CD4-positive, alpha-beta memory T cell (primary cell): ENCODE measurements at regions of chr5 and their contacts with region 1.

Region 1: GRCh38 chr5:175729829-175730277 is 72.0 kb downstream of the HRH2 start:
- DNase-seq: peak; percentile 82 to 89 (median 87)
- H3K4me3 ChIP-seq: no peak overlapping the region
- H3K4me3 Mint-ChIP-seq: peak overlapping the region in 1 of 8 donors; percentile 54
- H3K27ac ChIP-seq: no peak overlapping the region
- H3K27ac Mint-ChIP-seq: peak overlapping the region in 3 of 7 donors; percentile 14 to 46 (median 44)
- H3K4me1 ChIP-seq: peaks cover 5% of the 10 kb centered on the region
- H3K4me1 Mint-ChIP-seq: peaks cover 4 to 7% (median 7%) of the 10 kb centered on the region in 4 donors
- H3K27me3 ChIP-seq: peaks cover 4% of the 10 kb centered on the region
- H3K27me3 Mint-ChIP-seq: peaks cover 14 to 18% of the 10 kb centered on the region in 2 donors

Region 2: DNA sequence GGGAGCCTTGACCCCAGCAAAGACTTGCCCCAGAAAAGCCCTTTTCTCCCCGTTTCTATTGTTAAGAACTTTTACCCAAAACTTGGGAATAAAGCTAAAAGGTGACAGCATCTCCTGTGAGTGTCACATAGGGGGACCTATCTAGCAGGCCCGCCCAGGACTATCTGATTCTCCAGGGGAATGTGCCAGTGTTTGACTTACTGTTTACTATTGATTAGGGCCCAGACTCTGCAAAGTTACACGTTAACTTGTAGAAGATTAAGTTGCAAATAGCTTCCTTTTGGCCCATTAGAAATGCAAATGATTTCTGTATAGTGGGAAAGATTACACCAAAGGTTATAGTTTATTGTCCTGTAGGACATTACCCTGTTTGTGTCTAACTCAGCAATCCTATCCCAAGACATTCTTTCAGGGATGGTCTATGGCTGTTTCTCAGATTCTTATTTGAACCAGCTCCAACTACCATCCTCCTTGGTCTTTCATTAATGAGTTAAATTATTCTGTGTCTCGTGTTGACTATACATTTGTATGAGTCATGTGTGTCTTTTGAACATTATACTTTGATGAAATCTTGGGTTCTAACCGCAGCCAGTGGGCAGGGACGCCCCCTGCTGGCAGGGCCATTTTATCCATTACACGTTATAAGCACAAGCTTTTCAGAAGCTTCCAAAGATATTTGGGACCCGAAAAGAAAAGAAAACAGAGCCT is 11.3 kb before region 1 on chr5:
- CTCF ChIA-PET with region 1: interaction called, 21 read pairs
- POLR2A ChIA-PET with region 1: no interaction called
- intact Hi-C with region 1: no loop called
- DNase-seq: peak; percentile 33 to 47 (median 42)
- H3K4me3 ChIP-seq: no peak overlapping the region
- H3K4me3 Mint-ChIP-seq: no peak overlapping the region
- H3K27ac ChIP-seq: no peak overlapping the region
- H3K27ac Mint-ChIP-seq: no peak overlapping the region
- H3K4me1 ChIP-seq: no peaks in the 10 kb centered on the region
- H3K4me1 Mint-ChIP-seq: peaks cover 0 to 1% (median 0%) of the 10 kb centered on the region in 4 donors
- H3K27me3 ChIP-seq: no peaks in the 10 kb centered on the region
- H3K27me3 Mint-ChIP-seq: peaks cover 0 to 2% of the 10 kb centered on the region in 2 donors

Region 3: DNA sequence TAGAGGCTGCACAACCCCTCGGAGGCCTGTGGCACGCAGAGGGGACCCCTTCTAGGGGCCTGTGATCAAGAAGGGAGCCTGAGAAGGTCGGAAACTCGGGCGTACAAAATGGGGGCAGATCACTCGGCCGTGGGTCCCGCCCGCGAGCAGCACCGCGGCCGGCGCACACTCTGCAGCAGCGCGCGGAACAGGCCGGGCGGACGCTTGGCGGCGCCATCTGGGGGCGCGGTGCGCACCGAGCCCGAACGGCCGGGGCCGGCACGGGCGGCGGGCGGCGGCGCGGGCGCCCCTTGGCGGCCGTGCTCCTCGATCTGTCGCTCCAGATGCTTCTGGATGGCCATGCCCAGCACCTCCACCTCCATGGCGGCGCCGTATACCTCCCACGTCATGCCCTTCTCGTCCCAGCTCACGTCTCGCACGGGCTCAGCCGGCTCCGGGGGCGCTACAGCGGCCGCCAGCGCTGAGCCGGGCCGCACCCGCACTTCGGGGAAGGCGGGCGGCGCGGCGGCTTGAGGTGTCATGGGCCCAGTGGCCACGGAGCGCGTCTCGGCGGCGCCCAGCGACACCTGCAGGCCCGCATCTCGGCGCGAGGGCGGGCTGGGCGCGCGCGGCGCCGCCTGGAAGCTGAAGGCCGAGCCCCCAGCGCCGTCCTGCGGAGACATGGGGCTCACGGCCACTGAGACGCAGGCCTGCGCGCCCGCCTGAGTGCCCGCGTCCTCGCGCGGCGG is 867.0 kb after region 1 on chr5:
- CTCF ChIA-PET with region 1: interaction called, 4 read pairs
- POLR2A ChIA-PET with region 1: no interaction called
- intact Hi-C with region 1: loop called (anchors 1 kb)
- DNase-seq: peak; percentile 66 to 75 (median 73)
- H3K4me3 ChIP-seq: peak overlapping the region in 1 of 2 donors; percentile 37
- H3K4me3 Mint-ChIP-seq: peak overlapping the region; percentile 78 to 89 (median 82)
- H3K27ac ChIP-seq: no peak overlapping the region
- H3K27ac Mint-ChIP-seq: peak overlapping the region in 2 of 7 donors; percentile 75 to 77
- H3K4me1 ChIP-seq: peaks cover 6% of the 10 kb centered on the region
- H3K4me1 Mint-ChIP-seq: peaks cover 0 to 9% (median 6%) of the 10 kb centered on the region in 4 donors
- H3K27me3 ChIP-seq: no peaks in the 10 kb centered on the region
- H3K27me3 Mint-ChIP-seq: no peaks in the 10 kb centered on the region